HEK293 (cell line): ENCODE measurements at regions of chr10 and their contacts with region 1.

Region 1: GRCh38 chr10:120221873-120222485 is 235.0 kb upstream of the PLPP4 start:
- H3K4me3 ChIP-seq: no peak overlapping the region
- H3K27ac ChIP-seq: no peak overlapping the region
- H3K4me1 ChIP-seq: no peaks in the 10 kb centered on the region
- CTCF ChIP-seq: peak; percentile 46; the same call in 1 of the 2 replicates

Region 2: DNA sequence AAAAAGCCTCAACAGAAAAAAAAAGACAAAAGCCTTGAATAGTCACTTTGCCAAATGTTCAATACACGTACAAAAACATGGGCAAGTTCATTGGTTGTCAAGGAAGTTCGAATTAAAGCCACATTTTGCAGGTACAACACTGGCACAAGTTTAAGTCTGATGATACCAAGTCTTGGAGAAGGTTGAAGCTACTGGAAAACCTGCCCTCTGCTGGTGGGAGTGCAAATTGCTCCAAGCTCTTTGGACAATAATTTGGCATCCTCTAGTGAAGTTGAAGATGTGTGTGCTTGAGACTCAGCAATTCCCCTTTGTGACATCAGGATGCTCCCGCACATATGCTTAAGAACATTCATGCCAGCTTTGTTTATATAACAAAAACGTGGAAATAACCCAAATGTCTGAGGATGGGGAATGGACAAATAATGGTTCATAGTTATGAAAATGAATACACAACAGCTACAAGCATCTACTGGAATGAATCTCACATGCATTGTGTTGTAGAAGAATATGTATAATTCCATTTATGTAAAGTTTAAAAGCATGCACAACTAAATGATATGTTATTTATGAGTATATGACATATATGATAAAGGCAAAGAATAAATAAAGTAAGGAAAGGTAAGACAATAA is 115.0 kb after region 1 on chr10:
- CTCF ChIA-PET with region 1: interaction called, 45 read pairs
- POLR2A ChIA-PET with region 1: no interaction called
- H3K4me3 ChIP-seq: no peak overlapping the region
- H3K27ac ChIP-seq: no peak overlapping the region
- H3K4me1 ChIP-seq: no peaks in the 10 kb centered on the region
- CTCF ChIP-seq: peak; percentile 56